ENCODE measurements at regions of chr1 and their contacts with region 1.

Region 1: GRCh38 chr1:67847466-67847865 is 14.2 kb upstream of the GNG12 start:
- DNase-seq: no peak
- H3K4me3 ChIP-seq: no peak overlapping the region
- H3K27ac ChIP-seq: no peak overlapping the region
- H3K4me1 ChIP-seq: peaks cover 11% of the 10 kb centered on the region
- H3K27me3 ChIP-seq: no peaks in the 10 kb centered on the region
- CTCF ChIP-seq: no peak
- POLR2A ChIP-seq: no peak

Region 2: GRCh38 chr1:67760030-67760821 is 87.2 kb before region 1 on chr1:
- intact Hi-C with region 1: loop called (anchors 5 kb)
- DNase-seq: peak in 1 of 2 donors; percentile 82
- H3K4me3 ChIP-seq: no peak overlapping the region
- H3K27ac ChIP-seq: peak overlapping the region; percentile 40
- H3K4me1 ChIP-seq: peaks cover 33% of the 10 kb centered on the region
- H3K27me3 ChIP-seq: no peaks in the 10 kb centered on the region
- CTCF ChIP-seq: peak; percentile 83 to 94 (median 85)
- POLR2A ChIP-seq: no peak

Region 3: GRCh38 chr1:67814121-67814772 is 33.2 kb before region 1 on chr1:
- intact Hi-C with region 1: no loop called
- DNase-seq: no peak
- H3K4me3 ChIP-seq: no peak overlapping the region
- H3K27ac ChIP-seq: peak overlapping the region; percentile 56
- H3K4me1 ChIP-seq: peaks cover 85% of the 10 kb centered on the region
- H3K27me3 ChIP-seq: no peaks in the 10 kb centered on the region
- CTCF ChIP-seq: no peak
- POLR2A ChIP-seq: no peak

Measured in vagina (tissue), 2 donors.